Activated CD4-positive, alpha-beta memory T cell treated with anti-CD3 and anti-CD28 coated beads for 36 hours (primary cell): ENCODE measurements at regions of chr7 and their contacts with region 1.

Region 1: GRCh38 chr7:83655951-83656556 is 7.1 kb upstream of the SEMA3E start:
- DNase-seq: no peak
- H3K4me3 Mint-ChIP-seq: no peak overlapping the region
- H3K27ac Mint-ChIP-seq: no peak overlapping the region
- H3K4me1 Mint-ChIP-seq: no peaks in the 10 kb centered on the region
- H3K27me3 Mint-ChIP-seq: no peaks in the 10 kb centered on the region

Region 2: GRCh38 chr7:83410989-83411591 is 245.0 kb before region 1 on chr7:
- CTCF ChIA-PET with region 1: no interaction called
- POLR2A ChIA-PET with region 1: no interaction called
- intact Hi-C with region 1: loop called (anchors 2 kb)
- DNase-seq: no peak
- H3K4me3 Mint-ChIP-seq: no peak overlapping the region
- H3K27ac Mint-ChIP-seq: no peak overlapping the region
- H3K4me1 Mint-ChIP-seq: no peaks in the 10 kb centered on the region
- H3K27me3 Mint-ChIP-seq: no peaks in the 10 kb centered on the region